Activated CD8-positive, alpha-beta memory T cell treated with anti-CD3 and anti-CD28 coated beads, Interleukin-2, amount 10 ng/mL, durations not matched to agents 7 days and 5 days (primary cell): ENCODE measurements at regions of chr2 and their contacts with region 1.

Region 1: GRCh38 chr2:30862054-30862651 is 54.9 kb upstream of the CAPN13 start:
- DNase-seq: peak; percentile 65
- ATAC-seq: no peak
- H3K4me3 Mint-ChIP-seq: no peak overlapping the region
- H3K27ac Mint-ChIP-seq: no peak overlapping the region
- H3K4me1 Mint-ChIP-seq: peaks cover 12% of the 10 kb centered on the region
- H3K27me3 Mint-ChIP-seq: peaks cover 6% of the 10 kb centered on the region

Region 2: GRCh38 chr2:31333527-31334183 is 471.5 kb after region 1 on chr2:
- CTCF ChIA-PET with region 1: interaction called, 17 read pairs
- DNase-seq: peak; percentile 87
- ATAC-seq: peak; percentile 94
- H3K4me3 Mint-ChIP-seq: no peak overlapping the region
- H3K27ac Mint-ChIP-seq: no peak overlapping the region
- H3K4me1 Mint-ChIP-seq: no peaks in the 10 kb centered on the region
- H3K27me3 Mint-ChIP-seq: peaks cover 9% of the 10 kb centered on the region